ENCODE measurements at regions of chrX and their contacts with region 1.

Region 1: DNA sequence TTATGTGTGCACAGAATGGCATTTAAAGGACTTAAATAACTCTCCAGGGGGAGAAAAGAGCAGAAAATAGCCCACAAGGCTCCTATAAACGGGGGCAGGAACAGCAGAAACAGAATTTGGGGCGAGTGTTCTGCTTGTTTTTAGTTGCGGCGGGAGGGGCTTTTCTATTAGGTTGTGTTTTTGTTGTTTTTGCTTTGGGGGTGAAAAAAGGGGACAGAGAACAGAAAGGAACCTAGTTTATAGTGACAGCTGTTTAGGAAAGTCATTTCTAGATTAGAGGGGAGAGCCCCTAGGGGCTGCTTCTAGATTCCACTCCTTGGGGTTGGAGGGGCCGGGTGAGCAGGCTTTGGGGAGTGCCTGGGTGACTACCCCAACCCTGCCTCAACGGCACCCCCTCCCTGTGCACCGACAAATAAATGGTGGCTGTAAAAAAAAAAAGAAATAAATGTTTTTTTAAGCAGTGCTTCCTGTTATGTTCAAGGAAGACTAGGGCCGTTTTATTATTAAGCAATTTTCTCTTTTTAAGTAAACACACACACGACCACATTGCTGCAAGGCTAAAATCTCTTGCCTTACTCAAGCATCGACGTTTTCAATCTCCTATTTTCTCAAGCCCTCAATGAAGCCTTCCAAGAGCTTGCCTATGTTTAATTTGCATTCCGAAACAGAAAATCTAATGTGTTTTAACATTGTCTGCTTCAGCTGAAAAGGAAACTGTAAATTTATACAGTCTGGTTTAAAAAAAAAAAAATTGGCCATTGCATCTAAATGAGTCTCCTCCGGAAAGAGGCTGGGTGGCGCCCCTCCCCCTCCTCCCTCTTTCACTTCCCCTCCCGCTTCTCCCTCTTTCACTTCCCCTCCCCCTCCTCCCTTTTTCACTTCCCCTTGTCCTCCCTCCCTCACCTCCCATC is 123.3 kb upstream of the TBL1X start:
- DNase-seq: no peak
- ATAC-seq: no peak
- H3K4me3 ChIP-seq: peak overlapping the region in 1 of 2 experiments; percentile 39; a peak in 2 of 4 replicates
- H3K27ac ChIP-seq: peak overlapping the region; percentile 65
- H3K4me1 ChIP-seq: peaks cover 4% of the 10 kb centered on the region
- H3K27me3 ChIP-seq: no peaks in the 10 kb centered on the region
- CTCF ChIP-seq: 0 out of 2 replicates have a peak, but pooled peaks have one; percentile 5

Region 2: GRCh38 chrX:9163214-9163681 is 178.3 kb before region 1 on chrX:
- CTCF ChIA-PET with region 1: no interaction called
- POLR2A ChIA-PET with region 1: no interaction called
- in situ Hi-C with region 1: no loop called
- intact Hi-C with region 1: no loop called
- DNase-seq: no peak
- ATAC-seq: no peak
- H3K4me3 ChIP-seq: no peak overlapping the region
- H3K27ac ChIP-seq: no peak overlapping the region
- H3K4me1 ChIP-seq: no peaks in the 10 kb centered on the region
- H3K27me3 ChIP-seq: no peaks in the 10 kb centered on the region
- CTCF ChIP-seq: no peak

Region 3: GRCh38 chrX:9464435-9465371 is 123.2 kb after region 1 on chrX and contains the start of gene TBL1X:
- CTCF ChIA-PET with region 1: no interaction called
- POLR2A ChIA-PET with region 1: no interaction called
- in situ Hi-C with region 1: no loop called
- intact Hi-C with region 1: loop called (anchors 5 kb)
- DNase-seq: no peak
- ATAC-seq: peak; percentile 73
- H3K4me3 ChIP-seq: peak within 1 kb of the TSS; percentile 51 to 56
- H3K27ac ChIP-seq: peak within 1 kb of the TSS; percentile 75
- H3K4me1 ChIP-seq: peaks cover 9% of the 10 kb centered on the region
- H3K27me3 ChIP-seq: no peaks in the 10 kb centered on the region
- CTCF ChIP-seq: peak; percentile 23; the same call in 1 of the 2 replicates
- total RNA-seq, gene TBL1X: 14.6 TPM

Region 4: GRCh38 chrX:9708904-9709553 is 367.5 kb after region 1 on chrX:
- CTCF ChIA-PET with region 1: interaction called, 14 read pairs
- POLR2A ChIA-PET with region 1: no interaction called
- in situ Hi-C with region 1: no loop called
- intact Hi-C with region 1: no loop called
- DNase-seq: peak; percentile 45
- ATAC-seq: peak; percentile 79; the same call in 1 of the 2 replicates
- H3K4me3 ChIP-seq: no peak overlapping the region
- H3K27ac ChIP-seq: no peak overlapping the region
- H3K4me1 ChIP-seq: no peaks in the 10 kb centered on the region
- H3K27me3 ChIP-seq: no peaks in the 10 kb centered on the region
- CTCF ChIP-seq: peak; percentile 87